Mucosa of descending colon (tissue), 3 donors: ENCODE measurements at regions of chr1 and their contacts with region 1.

Region 1: GRCh38 chr1:208184088-208184911 is 59.9 kb downstream of the PLXNA2 start:
- DNase-seq: peak; percentile 66 to 78 (median 74)
- ATAC-seq: peak; percentile 93
- H3K4me3 ChIP-seq: no peak overlapping the region
- H3K4me1 ChIP-seq: peaks cover 51% of the 10 kb centered on the region
- CTCF ChIP-seq: no peak

Region 2: GRCh38 chr1:208132287-208132883 is 51.9 kb before region 1 on chr1:
- intact Hi-C with region 1: loop called in 1 of 2 experiments (anchors 10 kb)
- DNase-seq: peak; percentile 90 to 97 (median 95)
- ATAC-seq: peak; percentile 98
- H3K4me3 ChIP-seq: no peak overlapping the region
- H3K4me1 ChIP-seq: peaks cover 10% of the 10 kb centered on the region
- CTCF ChIP-seq: peak; percentile 86